ENCODE measurements at regions of chr1 and their contacts with region 1.

Region 1: GRCh38 chr1:248858891-248859889 is at the start of gene ZNF692:
- DNase-seq: peak; percentile 100
- ATAC-seq: peak; percentile 93
- total RNA-seq, gene ZNF692: 20.8 TPM

Region 2: DNA sequence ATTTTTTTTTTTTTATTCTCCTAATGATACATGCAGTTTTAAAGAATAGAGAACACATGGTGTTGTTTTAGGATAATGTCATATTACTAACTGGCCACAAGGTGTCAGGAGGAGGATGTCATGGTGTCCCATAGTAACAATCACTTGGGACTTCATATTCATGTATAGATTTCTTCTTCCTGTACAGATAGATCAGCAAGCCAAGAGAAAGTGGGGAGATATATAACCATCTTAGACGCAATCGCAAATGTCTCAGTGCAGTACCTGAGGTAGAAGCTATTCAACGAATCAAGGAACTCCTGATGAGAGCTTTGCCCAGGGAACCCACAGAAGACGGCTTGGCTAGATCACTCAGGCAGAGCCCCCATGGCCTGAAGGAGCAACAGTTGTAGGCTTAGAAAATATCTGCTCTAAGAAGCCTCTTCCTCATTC is 236.6 kb before region 1 on chr1:
- intact Hi-C with region 1: no loop called
- DNase-seq: no peak
- ATAC-seq: no peak

Region 3: GRCh38 chr1:248837794-248838356 is 21.3 kb before region 1 on chr1 and contains the start of gene ZNF672:
- intact Hi-C with region 1: loop called (anchors 1 kb)
- DNase-seq: peak; percentile 99
- ATAC-seq: peak; percentile 94
- total RNA-seq, gene ZNF672: 40.3 TPM

Region 4: GRCh38 chr1:248873409-248873992 is 14.3 kb after region 1 on chr1:
- intact Hi-C with region 1: loop called (anchors 1 kb)
- DNase-seq: peak; percentile 96
- ATAC-seq: peak; percentile 94